IMR-90 (cell line): ENCODE measurements at regions of chr4 and their contacts with region 1.

Region 1: DNA sequence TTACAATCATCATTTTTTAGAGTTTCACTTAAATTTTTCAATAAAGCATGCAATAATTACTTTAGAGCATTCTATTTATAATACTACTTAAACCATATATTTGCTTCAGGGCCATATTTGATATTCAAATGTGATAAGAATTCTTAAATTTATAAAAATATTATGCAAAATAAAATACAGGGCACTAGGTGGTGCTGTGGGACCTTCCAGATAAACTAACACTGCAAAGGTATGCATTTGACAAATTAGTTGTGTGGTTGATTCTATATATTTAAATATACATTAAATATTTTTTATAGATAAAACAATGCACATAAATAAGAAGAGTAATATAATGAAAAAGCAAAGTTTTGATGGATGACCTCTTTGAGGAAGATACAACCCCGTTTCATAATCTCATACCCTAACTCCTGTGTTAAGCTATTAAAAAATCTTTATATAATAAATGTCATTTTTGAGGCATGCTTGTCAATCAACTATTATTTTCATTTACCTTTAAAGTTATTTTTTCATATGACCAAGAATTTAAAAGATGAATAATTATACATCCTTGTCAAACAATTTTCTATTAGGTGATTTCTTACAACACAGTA is 128.4 kb downstream of the REELD1 start:
- DNase-seq: peak; percentile 47
- ATAC-seq: peak; percentile 51; the same call in 1 of the 2 replicates
- H3K4me3 ChIP-seq: no peak overlapping the region
- H3K27ac ChIP-seq: no peak overlapping the region
- H3K4me1 ChIP-seq: no peaks in the 10 kb centered on the region
- H3K27me3 ChIP-seq: no peaks in the 10 kb centered on the region
- CTCF ChIP-seq: peak; percentile 64
- POLR2A ChIP-seq: no peak
- RAD21 ChIP-seq: peak; percentile 64

Region 2: GRCh38 chr4:146095091-146095690 is 247.5 kb before region 1 on chr4:
- CTCF ChIA-PET with region 1: no interaction called
- POLR2A ChIA-PET with region 1: no interaction called
- dilution Hi-C with region 1: no loop called
- in situ Hi-C with region 1: no loop called
- intact Hi-C with region 1: loop called (anchors 2 kb)
- DNase-seq: peak; percentile 65
- ATAC-seq: no peak
- H3K4me3 ChIP-seq: no peak overlapping the region
- H3K27ac ChIP-seq: no peak overlapping the region
- H3K4me1 ChIP-seq: no peaks in the 10 kb centered on the region
- H3K27me3 ChIP-seq: peaks cover 6% of the 10 kb centered on the region
- CTCF ChIP-seq: peak; percentile 66
- POLR2A ChIP-seq: no peak
- RAD21 ChIP-seq: peak; percentile 56

Region 3: GRCh38 chr4:146522098-146522868 is 179.6 kb after region 1 on chr4:
- CTCF ChIA-PET with region 1: no interaction called
- POLR2A ChIA-PET with region 1: no interaction called
- dilution Hi-C with region 1: no loop called
- in situ Hi-C with region 1: no loop called
- intact Hi-C with region 1: loop called (anchors 1 kb)
- DNase-seq: peak; percentile 80
- ATAC-seq: peak; percentile 93
- H3K4me3 ChIP-seq: peak overlapping the region; percentile 94
- H3K27ac ChIP-seq: peak overlapping the region; percentile 68
- H3K4me1 ChIP-seq: no peaks in the 10 kb centered on the region
- H3K27me3 ChIP-seq: no peaks in the 10 kb centered on the region
- CTCF ChIP-seq: no peak
- POLR2A ChIP-seq: peak; percentile 19; the same call in 1 of the 2 replicates
- RAD21 ChIP-seq: no peak

Region 4: GRCh38 chr4:146654687-146655520 is 312.2 kb after region 1 on chr4:
- CTCF ChIA-PET with region 1: no interaction called
- POLR2A ChIA-PET with region 1: no interaction called
- dilution Hi-C with region 1: no loop called
- in situ Hi-C with region 1: no loop called
- intact Hi-C with region 1: loop called (anchors 1 kb)
- DNase-seq: peak; percentile 7
- ATAC-seq: peak; percentile 84
- H3K4me3 ChIP-seq: peak overlapping the region; percentile 37
- H3K27ac ChIP-seq: no peak overlapping the region
- H3K4me1 ChIP-seq: no peaks in the 10 kb centered on the region
- H3K27me3 ChIP-seq: peaks cover 30% of the 10 kb centered on the region
- CTCF ChIP-seq: no peak
- POLR2A ChIP-seq: no peak
- RAD21 ChIP-seq: no peak

Region 5: GRCh38 chr4:146916479-146917076 is 573.9 kb after region 1 on chr4:
- CTCF ChIA-PET with region 1: no interaction called
- POLR2A ChIA-PET with region 1: no interaction called
- dilution Hi-C with region 1: no loop called
- in situ Hi-C with region 1: loop called (anchors 5 kb)
- intact Hi-C with region 1: loop called (anchors 1 kb)
- DNase-seq: peak; percentile 47
- ATAC-seq: peak; percentile 60
- H3K4me3 ChIP-seq: no peak overlapping the region
- H3K27ac ChIP-seq: no peak overlapping the region
- H3K4me1 ChIP-seq: no peaks in the 10 kb centered on the region
- H3K27me3 ChIP-seq: peaks cover 4% of the 10 kb centered on the region
- CTCF ChIP-seq: peak; percentile 82
- POLR2A ChIP-seq: no peak
- RAD21 ChIP-seq: peak; percentile 83

Region 6: DNA sequence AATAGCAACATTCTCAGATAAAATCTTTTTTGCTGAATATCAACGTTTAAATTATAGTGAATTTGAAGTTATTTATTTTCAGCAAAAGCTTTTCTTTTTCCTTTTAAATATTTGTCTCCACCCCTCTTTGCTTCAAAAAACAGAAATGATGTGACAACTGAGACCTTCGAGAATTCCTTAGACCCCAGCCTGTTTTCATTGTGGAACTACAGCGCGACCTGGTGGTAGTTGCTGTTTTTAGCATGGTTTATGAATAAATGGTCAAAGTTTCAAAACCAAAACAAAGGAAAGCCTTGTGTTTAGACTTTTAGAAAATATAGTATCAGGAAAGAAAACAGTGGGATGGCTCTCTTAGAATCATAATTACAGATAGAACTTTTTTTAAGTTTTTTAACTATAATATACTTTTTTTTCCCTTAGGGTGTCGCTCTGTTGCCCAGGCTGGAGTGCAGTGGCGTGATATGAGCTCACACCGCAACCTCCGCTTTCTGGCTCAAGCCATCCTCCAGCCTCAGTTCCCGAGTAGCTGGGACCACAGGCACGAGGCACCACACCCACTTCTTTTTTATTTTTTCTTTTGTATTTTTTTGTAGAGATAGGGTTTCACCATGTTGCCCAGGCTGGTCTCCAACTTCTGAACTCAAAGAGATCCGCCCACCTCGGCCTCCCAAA is 1247.7 kb after region 1 on chr4:
- CTCF ChIA-PET with region 1: no interaction called
- POLR2A ChIA-PET with region 1: no interaction called
- dilution Hi-C with region 1: no loop called
- in situ Hi-C with region 1: loop called (anchors 25 kb)
- intact Hi-C with region 1: no loop called
- DNase-seq: peak; percentile 79
- ATAC-seq: peak; percentile 74
- H3K4me3 ChIP-seq: no peak overlapping the region
- H3K27ac ChIP-seq: peak overlapping the region; percentile 41; the same call in 1 of the 2 replicates
- H3K4me1 ChIP-seq: peaks cover 6% of the 10 kb centered on the region
- H3K27me3 ChIP-seq: no peaks in the 10 kb centered on the region
- CTCF ChIP-seq: peak; percentile 90
- POLR2A ChIP-seq: peak; percentile 41; the same call in 1 of the 2 replicates
- RAD21 ChIP-seq: peak; percentile 97